GM12878 (cell line): ENCODE measurements at regions of chr5 and their contacts with region 1.

Region 1: DNA sequence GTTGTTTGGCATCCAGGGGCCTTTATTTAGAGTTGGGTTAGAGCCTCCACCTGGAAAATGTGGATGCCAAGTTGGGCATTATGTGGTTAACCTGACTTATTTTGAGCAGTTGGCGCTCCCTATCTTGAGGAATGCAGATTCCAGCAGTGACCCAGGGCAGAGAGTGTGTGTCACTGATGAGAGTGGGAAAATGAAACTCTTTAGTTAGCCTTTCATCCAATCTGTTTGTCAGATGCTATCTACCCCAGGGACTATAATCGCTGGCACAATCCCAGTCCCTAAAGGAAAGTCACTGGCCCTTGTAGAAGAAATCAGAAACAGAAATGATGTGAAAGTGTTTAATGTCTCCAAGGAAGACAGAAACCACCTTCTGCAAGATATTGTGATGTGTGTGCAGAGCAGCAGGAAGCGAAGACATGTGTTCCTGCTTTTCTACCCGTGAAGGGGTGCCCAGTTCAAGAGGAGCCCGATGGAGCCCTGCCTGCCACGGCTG is 10.2 kb upstream of the STING1 start:
- DNase-seq: no peak
- ATAC-seq: no peak
- H3K4me3 ChIP-seq: no peak overlapping the region
- H3K27ac ChIP-seq: no peak overlapping the region
- H3K4me1 ChIP-seq: peaks cover 7% of the 10 kb centered on the region
- H3K27me3 ChIP-seq: no peaks in the 10 kb centered on the region
- CTCF ChIP-seq: no peak
- EP300 ChIP-seq: no peak
- POLR2A ChIP-seq: no peak
- RAD21 ChIP-seq: no peak

Region 2: GRCh38 chr5:139482050-139482889 is 10.5 kb before region 1 on chr5 and contains the start of gene STING1:
- CTCF ChIA-PET with region 1: interaction called, 12 read pairs
- POLR2A ChIA-PET with region 1: interaction called, 7 read pairs
- RAD21 ChIA-PET with region 1: interaction called, 7 read pairs
- SMC1A ChIA-PET with region 1: interaction called, 5 read pairs
- in situ Hi-C with region 1: no loop called
- intact Hi-C with region 1: no loop called
- DNase-seq: peak; percentile 41
- ATAC-seq: peak; percentile 75
- H3K4me3 ChIP-seq: peak within 1 kb of the TSS; percentile 59
- H3K27ac ChIP-seq: peak within 1 kb of the TSS; percentile 91
- H3K4me1 ChIP-seq: peaks cover 27% of the 10 kb centered on the region
- H3K27me3 ChIP-seq: no peaks in the 10 kb centered on the region
- CTCF ChIP-seq: no peak
- EP300 ChIP-seq: no peak
- POLR2A ChIP-seq: peak; percentile 29
- RAD21 ChIP-seq: no peak
- polyA plus RNA-seq, gene STING1: 10.1 to 12.1 TPM

Region 3: GRCh38 chr5:139593716-139594319 is 101.1 kb after region 1 on chr5:
- CTCF ChIA-PET with region 1: no interaction called
- POLR2A ChIA-PET with region 1: no interaction called
- RAD21 ChIA-PET with region 1: no interaction called
- SMC1A ChIA-PET with region 1: no interaction called
- in situ Hi-C with region 1: no loop called
- intact Hi-C with region 1: no loop called
- DNase-seq: no peak
- ATAC-seq: peak; percentile 44
- H3K4me3 ChIP-seq: no peak overlapping the region
- H3K27ac ChIP-seq: peak overlapping the region; percentile 34
- H3K4me1 ChIP-seq: peaks cover 25% of the 10 kb centered on the region
- H3K27me3 ChIP-seq: no peaks in the 10 kb centered on the region
- CTCF ChIP-seq: no peak
- EP300 ChIP-seq: no peak
- POLR2A ChIP-seq: no peak
- RAD21 ChIP-seq: no peak

Region 4: DNA sequence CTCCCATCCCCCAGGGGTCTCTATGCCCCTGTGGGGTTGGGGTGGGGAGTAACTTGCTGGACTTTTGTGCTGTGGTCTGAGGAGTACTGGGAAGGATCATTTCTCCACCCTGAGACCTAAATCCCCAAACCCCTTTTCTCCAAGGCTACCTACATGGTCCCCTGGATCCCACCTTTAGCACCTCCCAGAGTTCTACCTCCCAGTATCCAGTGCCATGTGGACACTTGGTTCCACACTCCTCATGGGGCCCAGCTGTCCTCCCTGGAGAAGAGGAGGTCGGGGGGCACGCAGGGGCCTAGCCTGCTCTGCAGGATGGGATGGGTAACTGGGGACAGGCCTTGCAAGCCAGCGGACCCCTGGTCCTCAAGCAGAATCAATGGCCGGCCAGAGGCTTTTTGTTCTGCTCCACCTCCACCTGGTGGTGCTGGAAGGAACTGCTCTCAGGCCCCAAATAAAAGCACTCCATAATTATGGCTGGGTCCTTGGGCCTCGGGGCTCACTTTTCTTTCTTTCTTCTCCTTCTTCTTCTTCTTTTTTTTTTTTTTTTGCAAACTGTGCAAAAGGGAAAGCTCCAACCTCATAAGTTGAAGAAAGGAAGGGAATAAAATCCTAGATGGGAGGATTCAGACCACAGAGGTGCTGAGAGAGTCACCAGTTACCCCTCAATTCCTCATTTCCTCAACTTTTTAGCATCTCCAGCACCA is 371.3 kb after region 1 on chr5:
- CTCF ChIA-PET with region 1: no interaction called
- POLR2A ChIA-PET with region 1: no interaction called
- RAD21 ChIA-PET with region 1: no interaction called
- SMC1A ChIA-PET with region 1: no interaction called
- in situ Hi-C with region 1: no loop called
- intact Hi-C with region 1: no loop called
- DNase-seq: no peak
- ATAC-seq: peak; percentile 91
- H3K4me3 ChIP-seq: no peak overlapping the region
- H3K27ac ChIP-seq: no peak overlapping the region
- H3K4me1 ChIP-seq: peaks cover 8% of the 10 kb centered on the region
- H3K27me3 ChIP-seq: no peaks in the 10 kb centered on the region
- CTCF ChIP-seq: peak; percentile 76 to 85 (median 81)
- EP300 ChIP-seq: no peak
- POLR2A ChIP-seq: no peak
- RAD21 ChIP-seq: peak; percentile 74